OCI-LY7 (cell line): ENCODE measurements at regions of chr7 and their contacts with region 1.

Region 1: GRCh38 chr7:138480527-138480926 is 20.5 kb downstream of the TRIM24 start:
- DNase-seq: no peak
- H3K4me3 ChIP-seq: no peak overlapping the region
- H3K27ac ChIP-seq: no peak overlapping the region
- H3K4me1 ChIP-seq: peaks cover 6% of the 10 kb centered on the region
- CTCF ChIP-seq: no peak

Region 2: GRCh38 chr7:137978464-137979237 is 501.9 kb before region 1 on chr7:
- CTCF ChIA-PET with region 1: no interaction called
- POLR2A ChIA-PET with region 1: no interaction called
- intact Hi-C with region 1: no loop called
- DNase-seq: no peak
- H3K4me3 ChIP-seq: no peak overlapping the region
- H3K27ac ChIP-seq: no peak overlapping the region
- H3K4me1 ChIP-seq: peaks cover 28% of the 10 kb centered on the region
- CTCF ChIP-seq: no peak

Region 3: DNA sequence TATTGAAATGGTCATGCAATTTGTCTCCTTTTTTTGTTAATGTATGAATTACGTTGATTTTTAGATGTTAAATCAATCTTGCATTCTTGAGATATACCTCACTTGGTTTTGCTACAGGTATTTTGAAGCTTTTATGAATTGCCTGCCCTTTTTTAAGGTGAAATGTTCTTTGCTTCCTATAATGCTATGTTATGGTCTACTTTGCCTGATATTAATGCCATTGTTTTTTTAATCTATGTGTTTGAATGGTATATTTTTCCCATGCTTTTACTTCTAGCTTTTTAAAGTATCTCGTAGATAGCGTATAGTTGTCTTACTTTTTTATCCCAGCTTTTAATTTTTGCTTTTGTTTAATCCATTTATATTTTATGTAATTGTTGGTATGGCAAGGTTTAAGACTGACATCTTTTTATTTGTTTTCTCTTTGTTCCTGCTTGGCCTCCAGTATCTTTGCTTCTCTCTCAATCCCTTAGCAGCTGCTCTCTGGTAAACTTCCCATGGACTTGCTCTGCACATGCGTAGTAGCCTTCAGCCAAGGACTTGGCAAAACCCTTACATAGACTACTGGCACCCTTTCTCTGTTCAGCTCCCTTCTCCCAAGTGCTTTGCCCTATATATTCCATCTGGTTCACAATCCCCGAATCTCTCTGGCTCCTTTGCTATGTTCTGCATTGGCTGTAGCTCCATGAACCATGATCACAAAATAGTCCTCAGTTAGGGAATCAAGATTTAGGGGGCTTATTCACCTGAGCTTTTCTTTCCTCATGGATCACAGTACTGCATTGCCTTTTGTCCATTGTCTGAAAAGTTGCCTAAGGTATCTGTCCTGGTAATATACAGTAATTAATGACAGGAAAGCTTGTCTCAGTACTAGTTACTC is 12.0 kb before region 1 on chr7:
- CTCF ChIA-PET with region 1: no interaction called
- POLR2A ChIA-PET with region 1: interaction called, 13 read pairs
- intact Hi-C with region 1: no loop called
- DNase-seq: no peak
- H3K4me3 ChIP-seq: no peak overlapping the region
- H3K27ac ChIP-seq: no peak overlapping the region
- H3K4me1 ChIP-seq: no peaks in the 10 kb centered on the region
- CTCF ChIP-seq: no peak